Common myeloid progenitor, CD34-positive (primary cell): ENCODE measurements at regions of chr13 and their contacts with region 1.

Region 1: DNA sequence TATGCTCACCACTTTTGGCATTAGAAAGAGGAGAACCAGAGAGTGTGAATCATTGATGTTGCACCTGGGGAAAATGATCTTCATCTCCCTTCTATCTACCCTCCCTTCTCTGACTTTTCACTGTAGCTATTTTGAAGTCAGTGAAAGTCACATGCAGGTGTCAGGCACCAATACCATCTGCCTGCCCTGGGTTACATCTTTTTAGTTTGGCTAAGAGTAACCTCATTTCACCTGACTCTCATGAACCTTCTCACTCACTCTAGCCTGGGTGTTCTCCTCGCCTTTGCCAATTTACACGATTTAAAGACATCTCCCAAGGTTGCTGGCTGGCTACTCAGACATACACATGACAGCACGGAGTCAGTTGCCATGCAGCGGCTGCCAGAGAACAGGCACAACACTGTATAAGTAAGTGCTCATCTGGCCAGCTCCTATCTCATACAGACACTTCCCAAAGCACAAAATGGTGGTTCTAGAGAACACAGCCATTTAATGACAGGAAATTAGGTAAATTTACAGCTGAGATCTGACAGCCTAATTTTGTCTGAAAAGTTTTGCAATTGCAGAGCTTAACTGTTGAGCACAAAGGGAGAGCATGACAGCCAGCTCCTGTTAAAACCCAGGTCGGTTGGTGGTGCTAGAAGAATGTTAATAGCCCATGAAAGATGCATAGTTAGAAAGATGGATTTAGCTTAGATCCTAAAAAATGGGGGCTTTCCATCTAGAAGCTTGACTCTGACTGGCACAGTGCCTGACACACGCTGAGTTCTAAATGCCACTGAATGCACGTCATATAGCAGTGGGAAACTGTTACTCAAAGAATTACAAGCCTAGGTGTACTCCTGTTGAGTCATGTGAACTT is 32.5 kb downstream of the LCP1 start:
- DNase-seq: no peak
- H3K4me3 ChIP-seq: no peak overlapping the region
- H3K27ac ChIP-seq: no peak overlapping the region
- H3K4me1 ChIP-seq: no peaks in the 10 kb centered on the region
- H3K27me3 ChIP-seq: no peaks in the 10 kb centered on the region

Region 2: GRCh38 chr13:46134961-46135522 is 14.5 kb before region 1 on chr13:
- CTCF ChIA-PET with region 1: interaction called, 15 read pairs
- POLR2A ChIA-PET with region 1: interaction called, 3 read pairs
- DNase-seq: no peak
- H3K4me3 ChIP-seq: no peak overlapping the region
- H3K27ac ChIP-seq: peak overlapping the region in 1 of 2 experiments; percentile 8
- H3K4me1 ChIP-seq: no peaks in the 10 kb centered on the region
- H3K27me3 ChIP-seq: no peaks in the 10 kb centered on the region

Region 3: GRCh38 chr13:46321494-46322225 is 172.2 kb after region 1 on chr13:
- CTCF ChIA-PET with region 1: interaction called, 11 read pairs
- POLR2A ChIA-PET with region 1: no interaction called
- DNase-seq: peak; percentile 64 to 86 (median 81)
- H3K4me3 ChIP-seq: no peak overlapping the region
- H3K27ac ChIP-seq: no peak overlapping the region
- H3K4me1 ChIP-seq: peaks cover 0 to 3% (median 1%) of the 10 kb centered on the region in 4 experiments
- H3K27me3 ChIP-seq: no peaks in the 10 kb centered on the region